ENCODE measurements at regions of chr4 and their contacts with region 1.

Region 1: DNA sequence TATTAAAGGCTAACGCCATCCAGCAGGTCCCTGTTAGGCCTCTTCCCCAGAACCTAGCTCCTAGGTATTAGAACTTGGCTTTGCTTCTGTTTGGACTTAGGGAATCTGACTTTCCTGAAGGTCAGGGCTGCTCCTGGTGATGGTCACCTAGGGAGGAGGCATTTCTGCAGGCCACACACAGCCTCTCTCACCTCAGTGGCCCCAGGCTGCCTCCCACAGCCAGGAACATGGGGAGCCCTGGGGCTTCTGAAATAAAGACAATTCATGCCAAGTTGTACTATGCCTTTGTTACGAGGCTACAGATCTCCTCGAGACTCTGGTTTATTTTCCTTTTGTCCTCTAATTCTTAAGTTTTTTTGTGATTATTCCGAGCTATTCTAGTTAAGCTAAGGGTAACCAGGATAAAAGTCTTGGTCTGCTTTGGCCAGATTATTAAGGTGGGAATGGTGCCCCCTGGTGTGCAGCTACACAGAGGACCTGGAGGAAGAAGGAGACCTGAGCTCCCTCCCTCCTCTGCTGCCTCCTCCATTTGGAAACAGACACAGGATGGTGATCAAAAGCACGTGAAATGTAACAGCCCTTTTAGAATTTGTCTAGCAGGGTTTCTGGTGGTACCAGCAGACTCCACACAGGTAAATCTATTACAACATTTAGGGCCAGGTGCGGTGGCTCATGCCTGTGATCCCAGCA is 131.0 kb downstream of the DCLK2 start:
- DNase-seq: peak; percentile 71
- ATAC-seq: peak; percentile 77
- H3K4me3 ChIP-seq: no peak overlapping the region
- H3K27ac ChIP-seq: no peak overlapping the region
- H3K4me1 ChIP-seq: peaks cover 7% of the 10 kb centered on the region
- H3K27me3 ChIP-seq: no peaks in the 10 kb centered on the region
- CTCF ChIP-seq: peak; percentile 64
- POLR2A ChIP-seq: no peak
- RAD21 ChIP-seq: peak; percentile 73

Region 2: DNA sequence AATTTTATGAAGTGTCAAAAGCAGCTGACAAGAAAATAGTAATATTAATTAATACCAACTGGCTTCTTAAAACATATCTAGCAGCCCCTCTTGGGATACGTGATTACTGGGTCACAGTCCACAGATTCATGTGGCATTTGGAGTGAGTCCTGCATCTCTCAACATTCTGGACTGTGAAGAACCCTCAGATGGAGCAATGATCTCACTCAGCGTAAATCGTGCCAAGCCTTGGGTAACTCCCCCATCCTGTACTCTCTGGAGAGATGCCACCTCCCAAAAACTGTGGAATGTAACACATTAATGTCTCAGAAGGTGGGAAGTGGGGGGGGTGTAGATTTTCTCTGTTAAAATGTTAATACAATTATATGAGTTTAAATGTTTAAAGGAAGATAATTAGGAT is 275.4 kb before region 1 on chr4:
- CTCF ChIA-PET with region 1: no interaction called
- POLR2A ChIA-PET with region 1: no interaction called
- dilution Hi-C with region 1: no loop called
- in situ Hi-C with region 1: no loop called
- intact Hi-C with region 1: no loop called
- DNase-seq: no peak
- ATAC-seq: no peak
- H3K4me3 ChIP-seq: no peak overlapping the region
- H3K27ac ChIP-seq: no peak overlapping the region
- H3K4me1 ChIP-seq: no peaks in the 10 kb centered on the region
- H3K27me3 ChIP-seq: peaks cover 1% of the 10 kb centered on the region; the same call in 1 of the 2 replicates
- CTCF ChIP-seq: no peak
- POLR2A ChIP-seq: no peak
- RAD21 ChIP-seq: no peak

Region 3: DNA sequence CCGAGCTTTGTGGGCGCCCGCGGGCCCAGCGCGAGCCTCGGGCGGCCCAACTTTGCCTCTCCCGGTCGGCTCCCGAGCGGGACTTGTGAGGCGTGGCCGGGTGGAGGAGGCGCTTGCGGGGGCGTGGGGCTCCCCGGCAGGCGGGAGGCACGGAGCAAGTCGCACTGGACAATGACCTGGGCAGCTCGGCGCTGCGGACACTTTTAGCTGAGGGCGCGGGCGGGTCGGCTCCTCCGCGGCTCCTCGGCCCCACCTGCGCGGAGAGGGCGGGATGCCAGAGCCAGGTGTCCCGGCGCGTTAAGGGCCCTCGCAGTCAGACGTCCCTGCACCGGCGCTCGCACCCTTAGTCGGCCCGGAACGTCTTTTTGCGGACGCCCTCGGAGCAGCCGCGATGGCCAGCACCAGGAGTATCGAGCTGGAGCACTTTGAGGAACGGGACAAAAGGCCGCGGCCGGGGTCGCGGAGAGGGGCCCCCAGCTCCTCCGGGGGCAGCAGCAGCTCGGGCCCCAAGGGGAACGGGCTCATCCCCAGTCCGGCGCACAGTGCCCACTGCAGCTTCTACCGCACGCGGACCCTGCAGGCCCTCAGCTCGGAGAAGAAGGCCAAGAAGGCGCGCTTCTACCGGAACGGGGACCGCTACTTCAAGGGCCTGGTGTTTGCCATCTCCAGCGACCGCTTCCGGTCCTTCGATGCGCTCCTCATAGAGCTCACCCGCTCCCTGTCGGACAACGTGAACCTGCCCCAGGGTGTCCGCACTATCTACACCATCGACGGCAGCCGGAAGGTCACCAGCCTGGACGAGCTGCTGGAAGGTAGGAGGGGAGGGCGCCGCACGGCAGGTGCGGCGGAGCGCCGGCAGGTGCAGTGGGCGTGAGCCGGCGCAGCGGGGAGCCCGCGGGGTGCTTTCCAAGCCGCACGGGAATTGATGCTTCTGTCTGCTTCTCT is 130.4 kb before region 1 on chr4:
- CTCF ChIA-PET with region 1: interaction called, 3 read pairs
- POLR2A ChIA-PET with region 1: no interaction called
- dilution Hi-C with region 1: no loop called
- in situ Hi-C with region 1: no loop called
- intact Hi-C with region 1: loop called (anchors 5 kb)
- DNase-seq: peak; percentile 46
- ATAC-seq: peak; percentile 75
- H3K4me3 ChIP-seq: peak overlapping the region; percentile 78
- H3K27ac ChIP-seq: peak overlapping the region; percentile 69
- H3K4me1 ChIP-seq: no peaks in the 10 kb centered on the region
- H3K27me3 ChIP-seq: no peaks in the 10 kb centered on the region
- CTCF ChIP-seq: 0 out of 2 replicates have a peak, but pooled peaks have one; percentile 14
- POLR2A ChIP-seq: no peak
- RAD21 ChIP-seq: peak; percentile 9; the same call in 1 of the 2 replicates

Region 4: GRCh38 chr4:150199056-150199455 is 10.2 kb before region 1 on chr4:
- CTCF ChIA-PET with region 1: interaction called, 13 read pairs
- POLR2A ChIA-PET with region 1: no interaction called
- dilution Hi-C with region 1: no loop called
- in situ Hi-C with region 1: no loop called
- intact Hi-C with region 1: no loop called
- DNase-seq: no peak
- ATAC-seq: no peak
- H3K4me3 ChIP-seq: no peak overlapping the region
- H3K27ac ChIP-seq: no peak overlapping the region
- H3K4me1 ChIP-seq: no peaks in the 10 kb centered on the region
- H3K27me3 ChIP-seq: no peaks in the 10 kb centered on the region
- CTCF ChIP-seq: no peak
- POLR2A ChIP-seq: no peak
- RAD21 ChIP-seq: no peak

Region 5: GRCh38 chr4:150268444-150268843 is 59.2 kb after region 1 on chr4:
- CTCF ChIA-PET with region 1: no interaction called
- POLR2A ChIA-PET with region 1: no interaction called
- dilution Hi-C with region 1: no loop called
- in situ Hi-C with region 1: no loop called
- intact Hi-C with region 1: no loop called
- DNase-seq: peak; percentile 25
- ATAC-seq: peak; percentile 32; the same call in 1 of the 2 replicates
- H3K4me3 ChIP-seq: no peak overlapping the region
- H3K27ac ChIP-seq: no peak overlapping the region
- H3K4me1 ChIP-seq: peaks cover 2% of the 10 kb centered on the region; the same call in 1 of the 2 replicates
- H3K27me3 ChIP-seq: no peaks in the 10 kb centered on the region
- CTCF ChIP-seq: no peak
- POLR2A ChIP-seq: no peak
- RAD21 ChIP-seq: no peak